Gastrocnemius medialis (tissue), 4 donors: ENCODE measurements at regions of chr11 and their contacts with region 1.

Region 1: DNA sequence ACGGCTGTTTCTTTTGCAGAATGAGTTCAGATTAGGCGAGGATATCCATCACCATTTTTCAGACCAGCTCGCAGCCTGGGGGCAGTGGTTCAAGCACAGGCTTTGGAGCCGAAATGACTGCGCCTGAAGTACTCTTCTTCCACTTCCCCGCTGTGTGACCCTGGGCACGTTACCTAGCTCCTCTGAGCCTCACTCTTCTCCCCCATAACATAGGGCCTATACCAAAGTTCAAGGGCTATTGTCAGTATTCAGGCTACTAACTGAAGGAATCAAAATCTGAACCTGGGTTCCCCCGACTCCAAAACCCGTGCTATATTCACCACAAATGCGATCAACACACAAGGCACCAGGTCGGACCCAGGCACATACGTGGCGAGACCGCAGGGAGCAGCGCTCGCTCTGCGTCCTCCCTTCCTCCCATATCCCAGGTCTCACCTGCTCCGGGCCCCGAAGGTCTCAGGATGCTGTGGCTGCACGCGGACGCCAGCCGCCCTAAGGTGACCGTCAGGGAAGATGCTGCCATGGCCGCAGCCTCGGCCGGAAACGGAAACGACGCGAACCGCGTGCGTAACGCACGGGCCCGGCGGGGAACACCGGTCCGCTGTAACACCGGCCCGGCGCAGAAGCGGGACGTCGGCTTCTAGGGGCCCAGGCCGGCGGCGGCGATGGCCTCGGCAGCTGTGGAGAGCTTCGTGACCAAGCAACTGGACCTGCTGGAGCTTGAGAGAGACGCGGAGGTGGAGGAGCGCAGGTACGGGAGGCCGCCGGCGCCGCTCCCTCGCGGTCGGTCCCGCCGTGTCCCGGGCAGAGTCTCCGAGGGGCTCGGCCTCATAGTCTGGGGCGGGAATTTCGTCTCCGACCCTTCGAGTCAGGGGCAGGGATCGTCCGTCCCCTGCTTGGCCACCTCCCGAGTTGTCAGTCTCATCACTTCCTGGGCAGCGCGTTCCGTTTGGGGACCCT is at the starts of genes IGHMBP2 and MRPL21:
- DNase-seq: peak; percentile 62 to 68
- ATAC-seq: peak; percentile 95
- H3K4me3 ChIP-seq: peak within 1 kb of the TSS; percentile 83 to 95 (median 88)
- H3K27ac ChIP-seq: peak within 1 kb of the TSS; percentile 82 to 88 (median 88)
- H3K4me1 ChIP-seq: peaks cover 20 to 28% of the 10 kb centered on the region in 2 donors
- H3K27me3 ChIP-seq: no peaks in the 10 kb centered on the region
- CTCF ChIP-seq: no peak
- POLR2A ChIP-seq: peak; percentile 62 to 69
- total RNA-seq, gene IGHMBP2: 15.5 to 22.3 (median 18.1) TPM
- total RNA-seq, gene MRPL21: 61.0 to 75.5 (median 64.6) TPM

Region 2: DNA sequence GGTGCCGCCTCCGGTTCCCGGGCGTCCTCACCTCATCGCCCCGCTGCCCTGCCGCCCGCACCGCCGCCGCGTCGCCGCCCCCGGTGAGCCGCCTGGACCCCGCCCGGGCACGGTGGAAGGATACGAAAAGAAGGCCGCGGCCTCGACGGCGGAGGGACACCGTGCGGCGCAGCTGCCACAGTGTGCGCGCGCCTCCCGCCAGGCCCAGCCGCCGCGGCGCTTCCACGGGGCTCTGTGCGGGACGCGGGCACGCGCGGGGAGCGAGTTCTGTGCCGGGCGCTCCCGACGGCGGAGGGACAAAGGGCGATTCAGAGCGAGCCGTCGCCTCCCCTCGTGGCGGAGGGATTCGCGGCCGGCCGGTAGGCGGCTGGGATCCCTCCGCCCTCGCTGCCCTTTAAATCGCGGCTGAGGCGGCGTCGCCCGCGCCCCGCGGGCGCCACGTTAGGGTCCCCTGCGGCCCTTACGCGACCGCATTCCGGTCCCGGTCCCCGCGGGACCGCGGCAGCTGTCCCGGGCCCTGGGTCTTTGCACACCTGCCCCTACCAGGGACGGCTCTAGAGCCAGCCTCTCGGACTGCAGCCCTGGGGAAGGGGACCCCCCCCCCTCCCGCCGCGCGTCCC is 689.9 kb before region 1 on chr11:
- in situ Hi-C with region 1: no loop called
- intact Hi-C with region 1: loop called (anchors 10 kb)
- DNase-seq: peak; percentile 81 to 87
- ATAC-seq: peak; percentile 33 to 37
- H3K4me3 ChIP-seq: peak overlapping the region; percentile 69 to 99 (median 91)
- H3K27ac ChIP-seq: peak overlapping the region; percentile 89 to 100 (median 96)
- H3K4me1 ChIP-seq: peaks cover 41 to 42% of the 10 kb centered on the region in 2 donors
- H3K27me3 ChIP-seq: no peaks in the 10 kb centered on the region
- CTCF ChIP-seq: peak in 4 of 5 experiments; percentile 12 to 68 (median 38)
- POLR2A ChIP-seq: peak; percentile 79 to 90

Region 3: DNA sequence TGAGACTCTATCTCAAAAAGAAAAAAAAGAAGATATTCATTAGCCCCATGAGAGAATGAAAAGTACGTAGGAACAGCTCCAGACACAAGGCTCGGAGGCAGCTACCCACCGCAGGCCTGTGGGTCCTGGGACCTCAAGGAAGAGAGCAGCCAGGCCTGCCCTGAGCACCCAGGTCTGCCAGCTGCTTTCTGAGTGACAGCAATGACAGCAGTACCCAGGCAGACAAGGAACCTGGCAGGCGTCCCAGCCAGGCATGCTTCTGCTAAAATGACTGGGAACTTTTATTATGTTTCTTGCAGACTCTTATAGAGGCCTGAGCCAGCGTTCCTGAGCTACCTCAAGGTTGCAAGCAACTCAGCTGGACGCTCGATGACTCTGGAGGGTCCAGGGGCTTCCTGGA is 93.4 kb before region 1 on chr11:
- in situ Hi-C with region 1: no loop called
- intact Hi-C with region 1: loop called (anchors 1 kb)
- DNase-seq: peak; percentile 76 to 88
- ATAC-seq: peak; percentile 90 to 95
- H3K4me3 ChIP-seq: no peak overlapping the region
- H3K27ac ChIP-seq: peak overlapping the region; percentile 45 to 73 (median 66)
- H3K4me1 ChIP-seq: peaks cover 15 to 21% of the 10 kb centered on the region in 2 donors
- H3K27me3 ChIP-seq: no peaks in the 10 kb centered on the region
- CTCF ChIP-seq: no peak
- POLR2A ChIP-seq: no peak

Region 4: GRCh38 chr11:68927280-68928135 is 23.9 kb after region 1 on chr11:
- in situ Hi-C with region 1: no loop called
- intact Hi-C with region 1: no loop called
- DNase-seq: no peak
- ATAC-seq: no peak
- H3K4me3 ChIP-seq: no peak overlapping the region
- H3K27ac ChIP-seq: no peak overlapping the region
- H3K4me1 ChIP-seq: peaks cover 7 to 19% of the 10 kb centered on the region in 2 donors
- H3K27me3 ChIP-seq: no peaks in the 10 kb centered on the region
- CTCF ChIP-seq: no peak
- POLR2A ChIP-seq: no peak

Region 5: DNA sequence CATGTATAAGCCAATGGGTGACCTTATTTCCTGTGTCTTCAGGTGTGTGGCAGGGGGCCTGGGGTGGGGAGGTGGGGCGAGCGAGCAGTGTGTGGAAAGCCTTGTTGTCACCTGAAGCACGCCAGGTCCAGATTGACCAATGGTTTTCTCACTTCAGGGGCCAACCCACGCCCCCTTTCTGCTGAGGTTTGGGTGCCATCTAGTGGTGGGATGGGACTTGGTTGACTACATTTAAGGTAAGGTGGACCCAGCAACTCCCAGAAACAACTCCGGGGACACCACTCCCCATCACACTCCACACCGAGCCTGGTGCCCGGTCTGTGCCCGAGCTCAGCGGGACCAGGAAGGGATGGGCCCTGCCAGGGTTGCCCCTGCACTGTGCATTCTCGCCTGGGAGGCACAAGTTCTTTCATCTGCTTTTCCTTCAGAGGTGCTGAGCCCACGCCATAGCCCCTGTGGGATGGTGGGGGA is 185.1 kb after region 1 on chr11:
- in situ Hi-C with region 1: no loop called
- intact Hi-C with region 1: loop called (anchors 2 kb)
- DNase-seq: peak; percentile 32 to 47
- ATAC-seq: peak; percentile 39 to 62
- H3K4me3 ChIP-seq: no peak overlapping the region
- H3K27ac ChIP-seq: peak overlapping the region in 2 of 4 donors; percentile 36 to 53
- H3K4me1 ChIP-seq: peaks cover 2% of the 10 kb centered on the region in 2 donors
- H3K27me3 ChIP-seq: no peaks in the 10 kb centered on the region
- CTCF ChIP-seq: peak; percentile 15 to 69 (median 63)
- POLR2A ChIP-seq: no peak